Right cardiac atrium (tissue), 5 donors: ENCODE measurements at regions of chr16 and their contacts with region 1.

Region 1: DNA sequence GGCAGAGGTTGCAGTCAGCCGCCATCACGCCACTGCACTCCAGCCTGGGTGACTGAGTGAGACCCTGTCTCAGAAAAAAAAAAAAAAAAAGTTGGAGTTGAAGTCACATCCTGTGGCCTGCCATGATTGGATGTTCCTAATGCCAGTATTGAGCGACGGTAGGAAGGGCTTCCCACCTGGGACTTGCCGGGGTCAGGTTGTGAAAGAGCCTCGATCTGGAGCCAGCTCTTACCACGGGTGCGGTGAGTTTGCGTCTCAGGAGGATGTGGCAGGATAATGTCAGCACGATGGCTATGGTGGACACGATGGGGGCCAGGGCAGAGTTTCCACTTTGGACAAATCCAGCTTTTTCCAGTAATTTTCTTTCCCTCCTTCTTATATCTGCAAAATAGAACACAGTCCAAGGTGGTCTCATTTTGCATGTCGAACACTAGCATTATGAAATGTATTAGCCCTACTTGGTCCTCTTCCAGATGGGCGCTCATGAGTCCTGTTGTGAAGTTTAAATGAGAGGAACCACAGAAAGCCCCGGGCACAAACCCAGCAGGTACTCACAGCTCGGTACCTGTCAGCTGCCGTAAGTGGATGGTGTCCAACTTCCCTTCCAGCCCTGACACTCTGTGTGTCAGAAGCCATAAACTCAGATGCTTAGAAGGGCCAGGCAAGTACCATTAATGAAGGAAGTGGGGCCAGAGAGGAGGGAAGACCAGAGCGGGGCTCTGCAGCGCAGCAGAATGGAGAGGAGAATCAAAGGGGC is 22.2 kb downstream of the ABCC12 start:
- DNase-seq: no peak
- ATAC-seq: no peak
- H3K4me3 ChIP-seq: no peak overlapping the region
- H3K27ac ChIP-seq: no peak overlapping the region
- H3K4me1 ChIP-seq: peaks cover 2% of the 10 kb centered on the region
- H3K27me3 ChIP-seq: no peaks in the 10 kb centered on the region

Region 2: GRCh38 chr16:47366228-47366627 is 767.4 kb before region 1 on chr16:
- intact Hi-C with region 1: loop called in 1 of 4 experiments (anchors 5 kb)
- DNase-seq: no peak
- ATAC-seq: no peak
- H3K4me3 ChIP-seq: no peak overlapping the region
- H3K27ac ChIP-seq: no peak overlapping the region
- H3K4me1 ChIP-seq: no peaks in the 10 kb centered on the region
- H3K27me3 ChIP-seq: no peaks in the 10 kb centered on the region